A673 (cell line): ENCODE measurements at regions of chr4 and their contacts with region 1.

Region 1: GRCh38 chr4:127479031-127479622 is 153.6 kb upstream of the INTU start:
- DNase-seq: peak; percentile 61
- H3K4me3 ChIP-seq: no peak overlapping the region
- H3K27ac ChIP-seq: no peak overlapping the region
- H3K4me1 ChIP-seq: no peaks in the 10 kb centered on the region
- H3K27me3 ChIP-seq: no peaks in the 10 kb centered on the region
- CTCF ChIP-seq: peak; percentile 72

Region 2: GRCh38 chr4:126465341-126465740 is 1013.8 kb before region 1 on chr4:
- CTCF ChIA-PET with region 1: no interaction called
- POLR2A ChIA-PET with region 1: no interaction called
- intact Hi-C with region 1: loop called (anchors 10 kb)
- DNase-seq: no peak
- H3K4me3 ChIP-seq: no peak overlapping the region
- H3K27ac ChIP-seq: peak overlapping the region; percentile 99
- H3K4me1 ChIP-seq: peaks cover 34% of the 10 kb centered on the region
- H3K27me3 ChIP-seq: no peaks in the 10 kb centered on the region
- CTCF ChIP-seq: no peak

Region 3: GRCh38 chr4:126583509-126583908 is 895.6 kb before region 1 on chr4:
- CTCF ChIA-PET with region 1: no interaction called
- POLR2A ChIA-PET with region 1: no interaction called
- intact Hi-C with region 1: loop called (anchors 5 kb)
- DNase-seq: peak; percentile 59
- H3K4me3 ChIP-seq: no peak overlapping the region
- H3K27ac ChIP-seq: no peak overlapping the region
- H3K4me1 ChIP-seq: no peaks in the 10 kb centered on the region
- H3K27me3 ChIP-seq: no peaks in the 10 kb centered on the region
- CTCF ChIP-seq: peak; percentile 47

Region 4: DNA sequence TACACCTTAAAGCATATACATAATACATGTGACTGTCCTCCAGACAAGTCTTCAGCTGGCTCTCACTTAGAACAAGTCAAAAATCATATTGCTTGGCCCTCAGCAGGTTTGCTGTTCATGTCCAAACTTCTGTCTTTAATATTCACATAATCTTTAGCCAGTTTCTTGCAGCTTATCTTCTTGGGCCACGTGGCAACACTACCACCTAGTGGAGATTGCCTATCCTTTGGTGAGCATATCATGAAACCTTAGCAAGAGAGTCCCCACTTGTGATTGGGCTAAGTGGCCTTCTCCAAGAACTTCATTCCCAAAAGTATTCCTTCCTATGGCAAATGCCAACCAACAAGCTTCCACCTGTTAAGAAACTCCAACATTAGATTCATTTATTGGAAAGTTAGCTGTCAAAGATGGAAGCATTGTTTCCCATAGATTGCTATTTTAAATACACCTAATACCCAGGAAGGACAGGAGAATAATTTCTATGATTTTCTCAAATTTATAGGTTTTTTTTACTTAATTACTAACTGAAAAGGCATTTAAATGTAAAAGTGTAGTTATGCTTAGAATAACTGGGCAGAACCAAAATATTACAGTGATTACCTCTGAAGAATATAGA is 78.3 kb before region 1 on chr4:
- CTCF ChIA-PET with region 1: no interaction called
- POLR2A ChIA-PET with region 1: no interaction called
- intact Hi-C with region 1: loop called (anchors 5 kb)
- DNase-seq: peak; percentile 87
- H3K4me3 ChIP-seq: no peak overlapping the region
- H3K27ac ChIP-seq: no peak overlapping the region
- H3K4me1 ChIP-seq: peaks cover 5% of the 10 kb centered on the region
- H3K27me3 ChIP-seq: no peaks in the 10 kb centered on the region
- CTCF ChIP-seq: peak; percentile 83

Region 5: GRCh38 chr4:127538016-127538415 is 58.9 kb after region 1 on chr4:
- CTCF ChIA-PET with region 1: no interaction called
- POLR2A ChIA-PET with region 1: no interaction called
- intact Hi-C with region 1: loop called (anchors 2 kb)
- DNase-seq: no peak
- H3K4me3 ChIP-seq: no peak overlapping the region
- H3K27ac ChIP-seq: no peak overlapping the region
- H3K4me1 ChIP-seq: no peaks in the 10 kb centered on the region
- H3K27me3 ChIP-seq: no peaks in the 10 kb centered on the region
- CTCF ChIP-seq: no peak